BJ (cell line): ENCODE measurements at regions of chr5 and their contacts with region 1.

Region 1: DNA sequence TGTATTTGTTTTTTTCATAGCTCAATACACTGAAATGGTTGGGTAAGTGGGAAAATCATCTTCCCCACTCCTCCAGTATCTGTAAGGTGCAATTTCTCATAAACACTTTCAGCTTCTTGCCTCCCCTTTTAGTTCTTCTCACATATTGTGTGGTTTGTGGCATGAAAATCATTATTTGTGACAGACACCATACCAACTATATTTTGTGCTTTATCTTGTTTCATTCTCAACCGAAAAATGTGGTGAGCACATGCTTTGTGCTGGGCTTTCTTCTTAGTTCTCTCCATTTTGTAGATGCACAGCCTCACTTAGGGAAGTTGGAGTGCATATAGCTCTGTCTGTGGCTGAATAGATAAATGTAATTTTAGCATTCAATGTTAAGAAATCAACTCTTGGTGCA is 6.4 kb upstream of the ANXA2R start:
- DNase-seq: no peak
- H3K4me3 ChIP-seq: no peak overlapping the region
- H3K27me3 ChIP-seq: no peaks in the 10 kb centered on the region
- CTCF ChIP-seq: no peak

Region 2: DNA sequence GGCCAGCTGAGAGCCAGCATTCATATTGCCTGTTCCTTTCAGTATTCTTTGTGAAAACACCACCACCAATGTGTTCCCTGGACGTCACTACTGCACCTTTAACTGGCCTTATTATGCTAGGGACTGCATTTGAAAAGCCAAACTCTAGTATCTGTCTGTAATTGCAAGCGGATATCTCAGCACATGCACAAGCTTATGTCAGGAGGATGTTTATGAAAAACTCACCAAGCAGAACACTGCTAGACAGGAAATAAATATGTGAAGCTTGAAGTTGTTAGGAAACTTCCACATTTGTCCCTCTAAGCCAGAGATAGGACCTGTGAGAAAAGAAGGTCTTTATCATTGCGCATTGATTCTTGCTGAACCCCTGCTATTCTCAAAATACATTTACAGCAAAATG is 425.2 kb before region 1 on chr5:
- CTCF ChIA-PET with region 1: no interaction called
- POLR2A ChIA-PET with region 1: no interaction called
- DNase-seq: no peak
- H3K4me3 ChIP-seq: no peak overlapping the region
- H3K27me3 ChIP-seq: no peaks in the 10 kb centered on the region
- CTCF ChIP-seq: no peak

Region 3: GRCh38 chr5:43066799-43067741 is 20.6 kb after region 1 on chr5:
- CTCF ChIA-PET with region 1: interaction called, 35 read pairs
- POLR2A ChIA-PET with region 1: no interaction called
- DNase-seq: no peak
- H3K4me3 ChIP-seq: peak overlapping the region; percentile 66
- H3K27me3 ChIP-seq: no peaks in the 10 kb centered on the region
- CTCF ChIP-seq: no peak